Heart left ventricle (tissue), 16 donors: ENCODE measurements at regions of chr14 and their contacts with region 1.

Region 1: DNA sequence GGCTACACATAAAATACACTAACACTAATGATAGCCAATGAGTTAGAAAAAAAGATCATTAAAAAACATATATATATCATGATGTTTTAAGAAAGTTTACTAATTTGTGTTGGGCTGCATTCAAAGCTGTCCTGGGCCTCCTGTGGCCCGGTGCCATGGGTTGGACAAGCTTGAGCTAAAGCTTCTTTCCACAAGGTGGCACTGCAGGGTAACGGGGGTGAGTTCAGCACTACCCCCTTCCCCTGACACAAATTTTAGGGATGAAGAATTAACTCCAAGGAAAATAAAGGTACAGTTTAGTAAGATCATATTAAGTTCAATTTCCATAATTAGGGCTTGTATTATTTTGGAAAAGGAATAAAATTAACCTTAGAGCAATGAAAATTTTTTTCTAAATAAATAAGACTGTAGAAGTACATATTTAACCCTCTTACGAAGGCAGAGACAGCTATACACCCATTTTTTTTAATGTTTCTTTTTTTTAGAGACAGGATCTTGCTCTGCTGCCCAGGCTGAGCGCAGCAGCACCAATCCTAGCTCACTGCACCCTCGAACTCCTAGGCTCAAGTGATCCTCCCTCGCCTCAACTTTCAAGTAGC is 38.9 kb downstream of the PPP1R13B start:
- DNase-seq: peak; percentile 77 to 81 (median 80)
- ATAC-seq: peak; percentile 70 to 88 (median 78)
- H3K4me3 ChIP-seq: no peak overlapping the region
- H3K27ac ChIP-seq: no peak overlapping the region
- H3K4me1 ChIP-seq: peaks cover 3 to 75% (median 27%) of the 10 kb centered on the region in 12 donors
- H3K27me3 ChIP-seq: no peaks in the 10 kb centered on the region
- CTCF ChIP-seq: peak; percentile 78 to 94 (median 90)
- POLR2A ChIP-seq: no peak

Region 2: DNA sequence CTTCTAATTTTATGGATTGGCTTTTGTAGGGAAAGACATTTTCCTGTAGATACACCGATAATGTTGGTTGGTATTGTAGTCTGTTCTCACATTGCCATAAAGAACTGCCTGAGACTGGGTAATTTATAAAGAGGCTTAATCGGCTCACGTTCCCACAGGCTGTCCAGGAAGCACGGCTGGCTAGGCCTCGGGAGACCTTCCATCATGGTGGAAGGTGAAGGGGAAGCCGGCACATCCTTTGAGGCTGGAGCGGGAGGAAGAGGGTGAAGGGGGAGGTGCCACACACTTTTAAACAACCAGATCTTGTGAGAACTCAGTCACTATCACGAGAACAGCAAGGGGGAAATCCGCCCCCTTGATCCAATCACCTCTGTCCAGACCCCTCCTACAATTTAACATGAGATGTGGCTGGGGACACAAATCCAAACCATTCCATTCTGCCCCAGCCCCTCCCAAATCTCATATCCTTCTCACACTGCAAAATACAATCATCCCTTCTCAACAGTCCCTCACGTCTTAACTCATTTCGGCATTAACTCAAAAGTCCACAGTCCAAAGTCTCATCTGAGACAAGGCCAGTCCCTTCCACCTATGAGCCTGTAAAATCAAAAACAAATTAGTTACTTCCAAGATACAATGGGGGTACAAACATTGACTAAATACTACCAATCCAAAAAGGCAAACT is 541.1 kb before region 1 on chr14:
- intact Hi-C with region 1: no loop called
- DNase-seq: no peak
- ATAC-seq: no peak
- H3K4me3 ChIP-seq: no peak overlapping the region
- H3K27ac ChIP-seq: no peak overlapping the region
- H3K4me1 ChIP-seq: no peaks in the 10 kb centered on the region
- H3K27me3 ChIP-seq: peaks cover 0 to 23% (median 2%) of the 10 kb centered on the region in 9 donors
- CTCF ChIP-seq: no peak
- POLR2A ChIP-seq: no peak

Region 3: DNA sequence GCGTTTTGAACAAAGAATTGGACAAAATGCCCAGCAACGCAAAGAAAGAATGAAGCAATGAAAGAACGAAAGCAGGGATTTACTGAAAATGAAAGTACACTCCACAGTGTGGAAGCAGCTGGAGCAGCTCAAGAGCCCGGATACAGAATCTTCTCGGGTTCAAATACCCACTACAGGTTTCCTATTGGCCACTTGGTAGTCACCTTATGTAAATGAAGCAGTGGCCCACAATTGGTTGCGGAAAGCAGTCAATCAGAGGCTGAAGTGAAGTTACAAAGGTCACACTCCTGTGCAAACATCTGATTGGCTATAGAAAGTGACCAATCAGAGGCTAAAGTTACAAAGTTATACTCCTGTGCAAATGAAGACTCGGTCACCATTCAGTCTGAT is 53.9 kb after region 1 on chr14:
- intact Hi-C with region 1: loop called in 1 of 10 experiments (anchors 5 kb)
- DNase-seq: no peak
- ATAC-seq: no peak
- H3K4me3 ChIP-seq: no peak overlapping the region
- H3K27ac ChIP-seq: peak overlapping the region in 8 of 12 donors; percentile 43 to 85 (median 70)
- H3K4me1 ChIP-seq: peaks cover 0 to 38% (median 5%) of the 10 kb centered on the region in 12 donors
- H3K27me3 ChIP-seq: no peaks in the 10 kb centered on the region
- CTCF ChIP-seq: no peak
- POLR2A ChIP-seq: no peak

Region 4: DNA sequence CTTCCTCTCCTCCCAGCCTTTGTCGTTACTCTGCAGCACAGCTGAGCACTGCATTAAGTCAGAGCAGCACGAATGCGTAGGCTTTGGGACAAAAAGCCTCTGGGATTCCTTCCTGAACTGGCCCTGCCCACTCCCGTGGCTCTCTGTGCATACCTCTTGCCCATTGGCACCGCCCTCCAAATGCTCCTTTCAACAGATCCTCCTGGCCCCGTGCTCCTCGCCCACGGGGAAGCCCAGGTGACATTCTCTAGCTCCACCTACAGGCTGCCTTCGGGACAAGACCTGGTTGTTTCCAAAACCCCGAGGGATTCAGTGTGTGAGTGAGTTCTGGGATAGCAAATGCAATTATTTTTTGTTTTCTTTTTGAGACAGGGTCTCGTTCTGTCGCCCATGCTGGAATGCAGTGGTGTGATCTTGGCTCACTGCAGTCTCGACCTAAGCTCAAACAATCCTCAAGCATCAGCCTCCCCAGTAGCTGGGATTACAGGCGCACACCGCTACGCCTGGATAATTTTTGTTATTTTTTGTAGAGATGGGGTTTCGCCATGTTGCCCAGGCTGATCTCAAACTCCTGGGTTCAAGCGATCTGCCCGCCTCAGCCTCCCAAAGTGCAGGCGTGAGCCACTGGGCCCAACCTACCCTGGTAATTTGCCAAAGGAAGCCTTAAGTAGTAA is 101.9 kb after region 1 on chr14:
- intact Hi-C with region 1: loop called (anchors 2 to 5 kb)
- DNase-seq: peak; percentile 80 to 88 (median 81)
- ATAC-seq: peak; percentile 91 to 97 (median 96)
- H3K4me3 ChIP-seq: peak overlapping the region in 8 of 12 donors; percentile 0 to 43 (median 26)
- H3K27ac ChIP-seq: peak overlapping the region in 8 of 12 donors; percentile 14 to 56 (median 34)
- H3K4me1 ChIP-seq: peaks cover 0 to 13% (median 10%) of the 10 kb centered on the region in 12 donors
- H3K27me3 ChIP-seq: no peaks in the 10 kb centered on the region
- CTCF ChIP-seq: peak; percentile 62 to 91 (median 84)
- POLR2A ChIP-seq: no peak

Region 5: GRCh38 chr14:103984196-103984595 is 175.7 kb after region 1 on chr14:
- intact Hi-C with region 1: loop called in 8 of 10 experiments (anchors 2 to 10 kb)
- DNase-seq: no peak
- ATAC-seq: no peak
- H3K4me3 ChIP-seq: no peak overlapping the region
- H3K27ac ChIP-seq: no peak overlapping the region
- H3K4me1 ChIP-seq: no peaks in the 10 kb centered on the region
- H3K27me3 ChIP-seq: no peaks in the 10 kb centered on the region
- CTCF ChIP-seq: no peak
- POLR2A ChIP-seq: no peak